ENCODE measurements at regions of chr6 and their contacts with region 1.

Region 1: GRCh38 chr6:12911387-12911960 is 194.9 kb downstream of the PHACTR1 start:
- DNase-seq: no peak
- H3K4me3 ChIP-seq: no peak overlapping the region
- H3K27ac ChIP-seq: no peak overlapping the region
- H3K4me1 ChIP-seq: no peaks in the 10 kb centered on the region
- H3K27me3 ChIP-seq: no peaks in the 10 kb centered on the region
- CTCF ChIP-seq: peak in 3 of 4 experiments; percentile 21 to 46 (median 41)
- EP300 ChIP-seq: no peak
- POLR2A ChIP-seq: no peak

Region 2: DNA sequence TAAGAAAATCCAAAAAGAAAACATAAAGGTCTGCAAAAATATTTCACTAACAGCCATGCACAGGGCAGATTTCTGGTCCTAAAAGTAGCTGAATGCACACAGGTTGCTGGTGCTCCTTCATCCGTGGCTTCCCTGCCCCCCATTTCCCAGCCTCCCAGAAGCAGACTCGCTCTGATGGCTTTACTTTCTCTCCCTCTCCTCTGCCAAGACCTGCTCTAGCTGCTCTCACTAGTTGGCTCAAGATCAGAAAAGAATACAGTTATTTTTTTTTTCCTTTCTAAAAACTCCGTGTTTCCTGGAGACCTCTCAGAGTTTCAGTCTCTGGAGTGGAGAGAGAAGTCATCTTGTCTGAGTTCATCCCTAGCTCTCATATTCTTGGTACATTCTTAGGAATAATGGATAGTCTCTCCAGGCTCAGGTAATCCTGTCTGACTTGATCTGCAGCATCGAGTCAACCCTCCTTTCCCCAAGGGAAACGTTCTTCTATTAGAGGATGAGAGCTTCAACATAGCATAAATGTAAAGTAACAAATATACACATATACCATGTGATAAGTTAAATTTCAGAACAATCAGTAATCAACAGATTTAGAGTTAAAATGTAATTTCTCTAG is 202.6 kb after region 1 on chr6:
- intact Hi-C with region 1: loop called (anchors 5 kb)
- DNase-seq: no peak
- H3K4me3 ChIP-seq: no peak overlapping the region
- H3K27ac ChIP-seq: no peak overlapping the region
- H3K4me1 ChIP-seq: peaks cover 0 to 14% (median 13%) of the 10 kb centered on the region in 4 donors
- H3K27me3 ChIP-seq: no peaks in the 10 kb centered on the region
- CTCF ChIP-seq: no peak
- EP300 ChIP-seq: no peak
- POLR2A ChIP-seq: no peak

Region 3: GRCh38 chr6:13328076-13328874 is 416.8 kb after region 1 on chr6 and contains the start of gene TBC1D7:
- intact Hi-C with region 1: loop called (anchors 2 kb)
- DNase-seq: peak; percentile 97
- H3K4me3 ChIP-seq: peak within 1 kb of the TSS; percentile 57 to 89 (median 80)
- H3K27ac ChIP-seq: peak within 1 kb of the TSS; percentile 83 to 94 (median 94)
- H3K4me1 ChIP-seq: peaks cover 0 to 16% (median 7%) of the 10 kb centered on the region in 4 donors
- H3K27me3 ChIP-seq: no peaks in the 10 kb centered on the region
- CTCF ChIP-seq: peak in 2 of 4 experiments; percentile 19 to 25
- EP300 ChIP-seq: no peak
- POLR2A ChIP-seq: peak; percentile 59 to 74
- total RNA-seq, gene TBC1D7: 7.2 to 13.8 (median 11.2) TPM